ENCODE measurements at regions of chr3 and their contacts with region 1.

Region 1: DNA sequence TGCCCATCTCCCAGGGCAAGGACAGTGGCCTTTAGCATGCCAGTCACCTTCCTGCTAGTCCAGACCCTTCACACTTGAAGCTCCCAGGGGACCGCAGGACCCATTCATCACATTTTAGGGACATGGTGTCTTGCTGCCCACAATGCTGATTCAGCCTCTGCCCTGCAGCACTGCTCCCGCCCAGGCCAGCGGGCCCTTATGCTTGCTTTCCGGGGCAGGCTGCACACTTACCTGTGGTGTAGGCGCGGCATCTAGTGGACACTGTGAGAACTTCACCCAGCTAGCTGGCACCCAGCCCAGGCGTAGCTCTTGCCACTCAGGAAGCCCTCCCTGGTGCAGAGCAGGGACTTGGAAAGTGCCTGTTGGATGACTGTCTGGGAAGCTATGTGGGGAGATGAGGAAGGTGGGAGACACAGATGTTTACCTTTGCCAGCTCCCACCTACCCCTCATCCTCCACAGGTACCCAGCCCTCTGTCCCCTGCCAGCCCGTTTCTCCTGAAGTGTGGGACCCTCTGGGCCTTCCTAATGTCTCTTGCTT is 26.2 kb upstream of the NR2C2 start:
- DNase-seq: peak; percentile 71
- H3K4me3 Mint-ChIP-seq: no peak overlapping the region
- H3K27ac Mint-ChIP-seq: no peak overlapping the region
- H3K4me1 Mint-ChIP-seq: no peaks in the 10 kb centered on the region
- H3K27me3 Mint-ChIP-seq: peaks cover 5% of the 10 kb centered on the region

Region 2: GRCh38 chr3:14203521-14204079 is 717.5 kb before region 1 on chr3:
- intact Hi-C with region 1: loop called (anchors 1 kb)
- DNase-seq: peak; percentile 11
- H3K4me3 Mint-ChIP-seq: no peak overlapping the region
- H3K27ac Mint-ChIP-seq: no peak overlapping the region
- H3K4me1 Mint-ChIP-seq: peaks cover 4% of the 10 kb centered on the region
- H3K27me3 Mint-ChIP-seq: no peaks in the 10 kb centered on the region

Region 3: DNA sequence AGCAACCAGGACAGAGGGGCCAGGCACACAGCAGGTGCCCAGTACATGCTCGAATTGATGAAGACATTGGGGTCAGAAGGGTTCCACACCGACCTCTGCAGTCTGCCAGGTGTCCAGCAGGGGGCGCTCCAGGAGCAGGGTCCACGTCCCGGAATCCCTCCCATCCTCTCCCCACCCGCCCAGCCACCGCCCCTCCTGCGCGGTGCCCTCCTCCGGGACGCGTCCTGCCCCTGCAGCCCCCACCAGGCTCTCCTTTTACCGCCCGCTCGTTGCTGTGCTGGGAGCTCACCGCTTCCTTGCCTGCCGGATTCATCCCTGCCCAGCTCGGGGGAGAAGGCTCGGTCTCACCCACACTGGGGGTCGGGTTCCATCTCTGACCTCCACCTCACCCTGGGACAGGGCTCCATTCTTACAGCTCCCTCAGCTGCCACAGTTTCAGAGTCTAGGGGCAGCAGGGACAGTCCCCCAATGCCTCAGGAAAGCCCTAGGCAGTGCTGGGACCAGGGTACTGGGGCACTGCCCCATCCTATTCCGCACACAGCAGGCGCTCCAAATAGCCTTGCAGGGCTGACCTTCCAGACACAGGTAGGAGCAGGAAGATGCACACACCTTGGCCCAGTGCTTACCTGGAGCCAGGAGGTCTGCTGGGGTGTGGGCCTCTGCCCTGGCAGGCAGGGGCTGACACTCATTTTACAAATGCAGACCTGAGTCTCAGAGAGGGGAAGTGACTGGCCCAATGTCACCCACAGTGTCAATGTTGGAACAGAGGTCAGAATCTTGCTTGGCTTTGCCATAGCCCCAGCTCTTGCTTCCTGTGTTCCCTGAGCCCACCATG is 412.0 kb before region 1 on chr3:
- intact Hi-C with region 1: loop called (anchors 1 kb)
- DNase-seq: peak; percentile 53
- H3K4me3 Mint-ChIP-seq: no peak overlapping the region
- H3K27ac Mint-ChIP-seq: no peak overlapping the region
- H3K4me1 Mint-ChIP-seq: no peaks in the 10 kb centered on the region
- H3K27me3 Mint-ChIP-seq: no peaks in the 10 kb centered on the region

Region 4: GRCh38 chr3:14678015-14678503 is 243.1 kb before region 1 on chr3:
- intact Hi-C with region 1: loop called (anchors 1 kb)
- DNase-seq: no peak
- H3K4me3 Mint-ChIP-seq: no peak overlapping the region
- H3K27ac Mint-ChIP-seq: no peak overlapping the region
- H3K4me1 Mint-ChIP-seq: no peaks in the 10 kb centered on the region
- H3K27me3 Mint-ChIP-seq: no peaks in the 10 kb centered on the region

Region 5: DNA sequence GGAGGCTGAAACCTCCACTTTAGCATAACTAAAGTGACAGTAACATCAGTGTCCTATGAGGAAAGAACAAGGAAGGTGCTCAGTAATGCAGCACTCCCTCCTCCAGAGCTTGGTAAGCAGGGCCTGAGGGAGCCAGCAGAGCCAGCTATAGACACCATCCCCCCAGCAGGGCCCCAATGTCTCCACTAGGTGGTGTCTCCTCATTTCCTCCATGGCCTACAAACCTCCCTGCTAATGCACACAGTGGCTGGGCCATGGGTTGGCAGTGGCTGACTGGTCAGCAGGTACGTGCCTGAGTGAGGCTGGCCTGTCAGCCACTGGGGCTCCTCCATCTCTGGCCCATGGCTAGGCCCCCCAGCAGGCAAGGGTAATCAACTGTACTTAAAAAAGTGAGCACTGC is 130.4 kb after region 1 on chr3:
- intact Hi-C with region 1: loop called (anchors 5 kb)
- DNase-seq: peak; percentile 17
- H3K4me3 Mint-ChIP-seq: no peak overlapping the region
- H3K27ac Mint-ChIP-seq: no peak overlapping the region
- H3K4me1 Mint-ChIP-seq: peaks cover 16% of the 10 kb centered on the region
- H3K27me3 Mint-ChIP-seq: no peaks in the 10 kb centered on the region